GM10248 (cell line): ENCODE measurements at regions of chr6 and their contacts with region 1.

Region 1: GRCh38 chr6:69673298-69673697 is 123.5 kb downstream of the LMBRD1 start:
- DNase-seq: no peak
- CTCF ChIP-seq: no peak

Region 2: DNA sequence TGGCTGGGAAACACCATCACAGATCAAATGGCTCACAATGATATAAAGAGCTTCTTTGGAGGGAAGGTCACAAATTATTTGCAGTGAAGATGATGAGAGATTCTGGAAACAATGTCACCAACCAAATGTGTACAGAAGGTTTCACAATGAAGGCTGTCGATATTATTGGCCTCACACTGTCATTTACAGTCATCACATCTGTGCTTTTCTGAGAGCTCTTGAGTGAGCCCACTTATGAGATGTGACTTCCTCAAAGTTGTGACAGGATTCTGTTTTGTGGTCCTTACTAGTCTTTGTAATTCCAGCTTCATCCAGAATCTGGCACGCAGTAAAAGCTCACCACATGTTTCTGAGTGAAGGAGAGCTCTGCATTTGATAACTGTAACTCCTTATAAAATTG is 10.1 kb before region 1 on chr6:
- CTCF ChIA-PET with region 1: interaction called, 12 read pairs
- POLR2A ChIA-PET with region 1: no interaction called
- DNase-seq: no peak
- CTCF ChIP-seq: no peak

Region 3: GRCh38 chr6:70686548-70687133 is 1013.3 kb after region 1 on chr6:
- CTCF ChIA-PET with region 1: no interaction called
- POLR2A ChIA-PET with region 1: no interaction called
- DNase-seq: peak; percentile 29
- CTCF ChIP-seq: peak; percentile 69